ENCODE measurements at regions of chr3 and their contacts with region 1.

Region 1: GRCh38 chr3:161808358-161808757 is 311.8 kb downstream of the OTOL1 start:
- DNase-seq: peak; percentile 7
- ATAC-seq: peak; percentile 73
- H3K4me3 ChIP-seq: no peak overlapping the region
- H3K27ac ChIP-seq: no peak overlapping the region
- H3K4me1 ChIP-seq: no peaks in the 10 kb centered on the region
- H3K27me3 ChIP-seq: no peaks in the 10 kb centered on the region
- CTCF ChIP-seq: no peak

Region 2: DNA sequence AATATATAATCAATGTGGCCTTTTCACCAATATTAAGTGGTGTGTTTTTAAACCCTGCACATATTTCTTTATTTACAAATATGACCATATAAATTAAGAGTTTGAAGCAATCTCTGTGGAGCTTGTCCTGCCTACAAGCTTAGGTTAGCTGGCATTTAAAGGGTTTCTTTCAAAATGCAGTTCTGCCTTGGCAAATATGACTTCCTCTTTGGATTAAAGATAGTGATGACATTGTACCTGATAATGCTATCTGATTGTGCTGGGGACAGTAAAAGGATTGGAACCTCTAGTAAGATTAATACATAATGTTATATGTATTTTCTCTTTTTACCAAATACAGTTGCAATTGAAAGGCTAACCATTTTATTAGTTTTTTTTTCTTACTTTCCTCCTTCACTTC is 62.6 kb before region 1 on chr3:
- CTCF ChIA-PET with region 1: no interaction called
- POLR2A ChIA-PET with region 1: no interaction called
- intact Hi-C with region 1: no loop called
- DNase-seq: no peak
- ATAC-seq: no peak
- H3K4me3 ChIP-seq: no peak overlapping the region
- H3K27ac ChIP-seq: no peak overlapping the region
- H3K4me1 ChIP-seq: no peaks in the 10 kb centered on the region
- H3K27me3 ChIP-seq: no peaks in the 10 kb centered on the region
- CTCF ChIP-seq: no peak

Region 3: DNA sequence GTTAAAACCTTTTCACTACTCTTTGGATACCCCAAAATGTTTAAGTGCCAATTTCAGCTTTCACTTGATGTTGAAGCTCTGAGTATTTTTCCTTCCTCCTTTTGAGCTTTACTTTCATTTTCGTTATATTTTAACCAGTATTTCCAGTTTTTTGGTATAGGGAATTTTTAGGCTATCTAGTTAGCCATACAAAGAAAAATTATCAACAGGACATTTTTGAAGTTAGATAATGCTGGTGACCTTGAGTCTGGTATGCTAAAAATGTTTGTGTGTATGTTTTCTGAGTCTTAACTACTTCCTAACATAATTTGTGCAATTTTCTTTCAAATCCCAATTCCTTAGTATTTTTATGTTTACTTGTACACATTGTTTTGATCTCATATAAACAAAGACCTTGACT is 27.0 kb before region 1 on chr3:
- CTCF ChIA-PET with region 1: no interaction called
- POLR2A ChIA-PET with region 1: interaction called, 3 read pairs
- intact Hi-C with region 1: loop called (anchors 1 kb)
- DNase-seq: peak; percentile 28
- ATAC-seq: no peak
- H3K4me3 ChIP-seq: peak overlapping the region; percentile 16; the same call in 1 of the 2 replicates
- H3K27ac ChIP-seq: no peak overlapping the region
- H3K4me1 ChIP-seq: no peaks in the 10 kb centered on the region
- H3K27me3 ChIP-seq: no peaks in the 10 kb centered on the region
- CTCF ChIP-seq: no peak

Region 4: GRCh38 chr3:162034368-162034767 is 226.0 kb after region 1 on chr3:
- CTCF ChIA-PET with region 1: no interaction called
- POLR2A ChIA-PET with region 1: no interaction called
- intact Hi-C with region 1: no loop called
- DNase-seq: peak; percentile 41
- ATAC-seq: no peak
- H3K4me3 ChIP-seq: no peak overlapping the region
- H3K27ac ChIP-seq: no peak overlapping the region
- H3K4me1 ChIP-seq: no peaks in the 10 kb centered on the region
- H3K27me3 ChIP-seq: no peaks in the 10 kb centered on the region
- CTCF ChIP-seq: no peak

Measured in PC-3 (cell line).